Activated B cell treated with CpG ODN at 0.5 μM for 24 hours (primary cell): ENCODE measurements at regions of chrX and their contacts with region 1.

Region 1: GRCh38 chrX:134396174-134396573 is 63.8 kb upstream of the HPRT1 start:
- DNase-seq: no peak
- ATAC-seq: no peak
- H3K4me3 Mint-ChIP-seq: no peak overlapping the region
- H3K27ac Mint-ChIP-seq: no peak overlapping the region
- H3K4me1 Mint-ChIP-seq: no peaks in the 10 kb centered on the region
- H3K27me3 Mint-ChIP-seq: no peaks in the 10 kb centered on the region
- CTCF ChIP-seq: no peak

Region 2: DNA sequence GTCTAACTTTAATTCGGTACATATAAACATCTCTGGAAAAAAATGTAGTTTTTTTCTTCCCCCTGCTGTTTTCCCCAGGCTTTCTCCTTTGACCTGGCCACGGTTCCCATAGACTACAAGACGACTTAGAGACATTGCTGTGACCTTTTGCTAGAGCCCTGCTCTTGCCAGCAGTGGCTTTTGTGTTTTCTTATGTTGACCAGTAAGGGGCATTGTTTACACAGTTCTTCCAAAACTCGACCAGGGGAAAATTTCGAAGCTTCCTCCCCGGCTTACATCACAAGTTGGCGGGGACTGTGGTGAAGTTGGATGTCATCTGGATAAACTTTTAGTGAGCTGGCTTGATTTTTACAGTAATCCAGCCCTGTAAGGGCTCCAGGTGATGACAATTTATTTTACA is 149.9 kb before region 1 on chrX:
- CTCF ChIA-PET with region 1: interaction called, 7 read pairs
- POLR2A ChIA-PET with region 1: no interaction called
- intact Hi-C with region 1: loop called (anchors 2 kb)
- DNase-seq: no peak
- ATAC-seq: no peak
- H3K4me3 Mint-ChIP-seq: no peak overlapping the region
- H3K27ac Mint-ChIP-seq: no peak overlapping the region
- H3K4me1 Mint-ChIP-seq: no peaks in the 10 kb centered on the region
- H3K27me3 Mint-ChIP-seq: peaks cover 4% of the 10 kb centered on the region
- CTCF ChIP-seq: no peak

Region 3: GRCh38 chrX:134338527-134338926 is 57.6 kb before region 1 on chrX:
- CTCF ChIA-PET with region 1: no interaction called
- POLR2A ChIA-PET with region 1: no interaction called
- intact Hi-C with region 1: no loop called
- DNase-seq: no peak
- ATAC-seq: no peak
- H3K4me3 Mint-ChIP-seq: no peak overlapping the region
- H3K27ac Mint-ChIP-seq: no peak overlapping the region
- H3K4me1 Mint-ChIP-seq: peaks cover 7% of the 10 kb centered on the region
- H3K27me3 Mint-ChIP-seq: no peaks in the 10 kb centered on the region
- CTCF ChIP-seq: no peak

Region 4: DNA sequence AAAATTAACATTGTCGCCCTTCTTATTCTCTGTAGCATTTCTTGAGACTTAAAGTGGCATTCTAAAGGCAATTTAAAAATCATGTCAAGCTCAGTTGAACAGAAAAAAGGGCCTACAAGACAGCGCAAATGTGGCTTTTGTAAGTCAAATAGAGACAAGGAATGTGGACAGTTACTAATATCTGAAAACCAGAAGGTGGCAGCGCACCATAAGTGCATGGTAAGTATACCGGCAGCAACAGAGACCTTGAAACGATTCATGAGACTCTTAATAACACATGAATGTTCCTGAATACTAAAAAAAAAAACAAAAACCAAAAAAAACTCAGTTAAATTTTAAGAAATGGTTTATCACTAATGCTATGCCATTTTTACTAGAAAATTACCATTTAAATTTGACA is 18.6 kb before region 1 on chrX:
- CTCF ChIA-PET with region 1: interaction called, 32 read pairs
- POLR2A ChIA-PET with region 1: no interaction called
- intact Hi-C with region 1: loop called (anchors 1 kb)
- DNase-seq: no peak
- ATAC-seq: no peak
- H3K4me3 Mint-ChIP-seq: no peak overlapping the region
- H3K27ac Mint-ChIP-seq: no peak overlapping the region
- H3K4me1 Mint-ChIP-seq: peaks cover 29% of the 10 kb centered on the region
- H3K27me3 Mint-ChIP-seq: no peaks in the 10 kb centered on the region
- CTCF ChIP-seq: no peak